ENCODE measurements at regions of chr4 and their contacts with region 1.

Region 1: GRCh38 chr4:75916091-75916661 is 13.9 kb upstream of the PPEF2 start:
- DNase-seq: no peak
- H3K4me3 ChIP-seq: no peak overlapping the region
- H3K27ac ChIP-seq: peak overlapping the region; percentile 15 to 66 (median 46)
- H3K4me1 ChIP-seq: peaks cover 0 to 27% (median 19%) of the 10 kb centered on the region in 4 donors
- H3K27me3 ChIP-seq: no peaks in the 10 kb centered on the region
- CTCF ChIP-seq: peak; percentile 64 to 91 (median 74)
- EP300 ChIP-seq: no peak
- POLR2A ChIP-seq: no peak

Region 2: DNA sequence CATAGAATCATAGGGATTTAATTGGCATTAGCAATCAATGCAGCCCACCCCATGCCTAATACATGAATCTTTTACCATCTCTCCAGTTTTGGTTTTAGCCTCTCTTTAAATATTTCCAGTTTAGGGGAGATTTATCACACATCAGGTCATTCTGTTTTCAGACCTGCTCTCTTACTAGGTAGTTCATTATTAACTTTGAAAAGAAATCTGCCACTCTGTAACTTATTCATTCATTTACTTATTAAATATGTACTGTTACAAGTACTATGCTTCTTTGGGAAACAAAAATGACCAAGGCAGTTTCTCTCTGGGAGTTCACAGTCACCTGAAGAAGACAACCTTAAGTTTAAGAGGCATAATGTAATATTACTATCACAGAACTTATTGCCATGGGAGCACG is 129.7 kb before region 1 on chr4:
- intact Hi-C with region 1: no loop called
- DNase-seq: no peak
- H3K4me3 ChIP-seq: no peak overlapping the region
- H3K27ac ChIP-seq: no peak overlapping the region
- H3K4me1 ChIP-seq: no peaks in the 10 kb centered on the region
- H3K27me3 ChIP-seq: no peaks in the 10 kb centered on the region
- CTCF ChIP-seq: no peak
- EP300 ChIP-seq: no peak
- POLR2A ChIP-seq: no peak

Region 3: GRCh38 chr4:75940692-75941253 is 24.6 kb after region 1 on chr4 and contains the start of gene NAAA:
- intact Hi-C with region 1: loop called (anchors 2 kb)
- DNase-seq: no peak
- H3K4me3 ChIP-seq: peak within 1 kb of the TSS; percentile 71 to 84 (median 79)
- H3K27ac ChIP-seq: peak within 1 kb of the TSS; percentile 66 to 85 (median 72)
- H3K4me1 ChIP-seq: peaks cover 4 to 19% (median 14%) of the 10 kb centered on the region in 4 donors
- H3K27me3 ChIP-seq: no peaks in the 10 kb centered on the region
- CTCF ChIP-seq: peak; percentile 31 to 64 (median 43)
- EP300 ChIP-seq: no peak
- POLR2A ChIP-seq: no peak
- total RNA-seq, gene NAAA: 20.7 to 55.7 (median 26.6) TPM

Region 4: GRCh38 chr4:76055016-76055415 is 138.8 kb after region 1 on chr4:
- intact Hi-C with region 1: no loop called
- DNase-seq: no peak
- H3K4me3 ChIP-seq: no peak overlapping the region
- H3K27ac ChIP-seq: no peak overlapping the region
- H3K4me1 ChIP-seq: no peaks in the 10 kb centered on the region
- H3K27me3 ChIP-seq: peaks cover 0 to 15% (median 4%) of the 10 kb centered on the region in 4 donors
- CTCF ChIP-seq: no peak
- EP300 ChIP-seq: no peak
- POLR2A ChIP-seq: no peak